Activated CD8-positive, alpha-beta T cell treated with anti-CD3 and anti-CD28 coated beads for 36 hours (primary cell): ENCODE measurements at regions of chr1 and their contacts with region 1.

Region 1: DNA sequence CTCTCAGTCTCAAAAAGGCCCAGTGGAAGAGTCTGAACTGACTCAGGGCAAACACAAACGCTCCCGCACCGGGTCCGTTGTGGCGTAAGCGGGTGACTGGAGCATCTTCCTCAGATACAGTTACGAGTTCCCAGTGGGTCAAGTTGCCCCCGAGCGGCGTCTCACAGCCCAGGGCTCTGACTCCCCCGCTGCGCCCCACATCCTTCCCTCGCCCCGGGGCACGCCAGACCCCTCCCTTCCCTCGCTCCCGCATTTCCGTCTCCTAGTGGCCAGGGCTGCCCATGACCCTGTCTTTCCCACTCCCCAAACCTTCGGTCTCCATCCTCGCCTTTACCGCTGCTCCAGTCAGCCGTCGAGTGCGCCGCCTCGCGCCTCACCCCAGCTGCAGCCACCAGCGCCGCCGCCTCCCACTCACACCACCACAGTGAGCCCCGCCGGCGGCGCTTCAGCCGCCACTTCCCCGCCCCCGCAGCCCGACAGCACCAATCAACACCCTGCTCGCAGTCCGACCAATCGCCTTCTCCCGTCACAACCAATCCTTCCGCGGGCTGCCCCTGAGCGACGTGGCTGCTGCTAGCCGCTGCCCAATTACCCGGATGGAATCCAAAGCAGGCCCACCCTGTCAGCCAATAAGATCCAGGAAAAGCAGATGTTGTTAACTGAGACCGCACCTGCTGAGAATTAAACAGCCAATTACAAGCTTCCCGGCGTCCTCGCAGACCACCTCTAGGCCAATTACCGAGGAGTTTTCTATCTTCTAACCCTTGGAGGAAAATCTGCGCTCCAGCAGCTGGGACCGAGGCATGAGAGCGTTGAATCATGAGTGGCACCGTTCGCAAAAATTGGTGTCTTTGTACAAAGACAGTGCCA is at the start of gene TDRKH:
- DNase-seq: peak; percentile 99
- ATAC-seq: peak; percentile 99
- H3K4me3 Mint-ChIP-seq: peak within 1 kb of the TSS; percentile 91
- H3K27ac Mint-ChIP-seq: peak within 1 kb of the TSS; percentile 79
- H3K4me1 Mint-ChIP-seq: peaks cover 23% of the 10 kb centered on the region
- H3K27me3 Mint-ChIP-seq: no peaks in the 10 kb centered on the region
- CTCF ChIP-seq: no peak
- total RNA-seq, gene TDRKH: 9.7 to 10.5 TPM

Region 2: GRCh38 chr1:151273925-151274466 is 516.3 kb before region 1 on chr1:
- CTCF ChIA-PET with region 1: no interaction called
- POLR2A ChIA-PET with region 1: no interaction called
- intact Hi-C with region 1: no loop called
- DNase-seq: no peak
- ATAC-seq: no peak
- H3K4me3 Mint-ChIP-seq: no peak overlapping the region
- H3K27ac Mint-ChIP-seq: no peak overlapping the region
- H3K4me1 Mint-ChIP-seq: peaks cover 18% of the 10 kb centered on the region
- H3K27me3 Mint-ChIP-seq: no peaks in the 10 kb centered on the region
- CTCF ChIP-seq: no peak

Region 3: GRCh38 chr1:151568626-151569088 is 221.6 kb before region 1 on chr1:
- CTCF ChIA-PET with region 1: no interaction called
- POLR2A ChIA-PET with region 1: no interaction called
- intact Hi-C with region 1: no loop called
- DNase-seq: peak; percentile 8
- ATAC-seq: peak; percentile 70
- H3K4me3 Mint-ChIP-seq: no peak overlapping the region
- H3K27ac Mint-ChIP-seq: no peak overlapping the region
- H3K4me1 Mint-ChIP-seq: no peaks in the 10 kb centered on the region
- H3K27me3 Mint-ChIP-seq: no peaks in the 10 kb centered on the region
- CTCF ChIP-seq: no peak

Region 4: DNA sequence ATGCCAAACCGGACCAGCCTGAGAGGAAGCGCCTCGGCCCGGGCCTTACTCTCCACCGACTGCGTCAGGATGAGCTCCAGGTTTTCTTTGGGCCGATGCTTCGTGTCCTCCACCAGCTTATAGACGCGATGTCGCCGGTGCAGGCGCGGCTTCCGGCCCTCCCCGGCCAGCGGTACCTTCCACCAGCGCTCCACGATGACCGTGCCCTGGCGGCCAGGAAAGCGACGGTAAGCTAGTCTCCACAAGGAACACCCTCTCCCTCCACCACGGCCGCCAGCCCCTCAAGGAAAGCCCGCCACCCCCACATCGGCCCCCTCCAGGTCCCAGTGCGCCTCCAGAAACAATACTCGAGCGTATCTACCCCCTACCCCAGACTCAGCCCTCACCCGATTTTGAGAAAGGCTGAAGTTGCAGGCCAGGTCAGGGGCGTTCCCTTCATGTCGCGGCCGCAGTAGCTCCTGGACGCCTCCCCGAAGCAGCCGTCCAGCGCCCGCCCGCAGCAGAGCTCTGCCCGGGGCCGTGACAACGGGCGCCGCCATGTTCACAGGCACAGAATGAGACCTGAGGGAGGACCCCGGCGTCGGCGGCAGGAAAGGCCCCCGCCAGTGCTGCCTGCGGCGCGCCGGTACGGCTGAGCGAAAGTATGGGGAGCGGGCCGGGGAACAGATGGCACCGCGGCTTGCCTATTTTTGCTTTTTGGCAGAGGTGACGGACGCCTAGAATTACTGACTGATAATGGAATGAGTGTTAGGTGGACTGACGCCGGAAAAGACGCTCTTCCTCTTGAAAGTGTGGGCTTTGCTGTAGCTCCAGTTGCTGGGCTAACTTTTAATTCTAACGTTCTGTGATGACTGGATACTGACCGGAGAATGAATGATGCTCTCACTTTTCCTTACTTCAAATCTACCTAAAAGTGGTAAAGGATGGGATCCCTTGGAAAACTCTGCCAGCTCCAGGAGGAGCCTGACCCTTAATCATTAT is 27.1 kb before region 1 on chr1 and contains the start of gene MRPL9:
- CTCF ChIA-PET with region 1: interaction called, 12 read pairs
- POLR2A ChIA-PET with region 1: interaction called, 7 read pairs
- intact Hi-C with region 1: no loop called
- DNase-seq: peak; percentile 91
- ATAC-seq: peak; percentile 99
- H3K4me3 Mint-ChIP-seq: peak within 1 kb of the TSS; percentile 83
- H3K27ac Mint-ChIP-seq: peak within 1 kb of the TSS; percentile 95
- H3K4me1 Mint-ChIP-seq: peaks cover 18% of the 10 kb centered on the region
- H3K27me3 Mint-ChIP-seq: no peaks in the 10 kb centered on the region
- CTCF ChIP-seq: no peak
- total RNA-seq, gene MRPL9: 121 to 141 TPM

Region 5: GRCh38 chr1:151773702-151774101 is 16.6 kb before region 1 on chr1:
- CTCF ChIA-PET with region 1: no interaction called
- POLR2A ChIA-PET with region 1: no interaction called
- intact Hi-C with region 1: no loop called
- DNase-seq: no peak
- ATAC-seq: no peak
- H3K4me3 Mint-ChIP-seq: no peak overlapping the region
- H3K27ac Mint-ChIP-seq: no peak overlapping the region
- H3K4me1 Mint-ChIP-seq: no peaks in the 10 kb centered on the region
- H3K27me3 Mint-ChIP-seq: no peaks in the 10 kb centered on the region
- CTCF ChIP-seq: no peak

Region 6: GRCh38 chr1:151828965-151829698 is 38.8 kb after region 1 on chr1:
- CTCF ChIA-PET with region 1: interaction called, 3 read pairs
- POLR2A ChIA-PET with region 1: interaction called, 3 read pairs
- intact Hi-C with region 1: loop called (anchors 5 kb)
- DNase-seq: peak; percentile 26
- ATAC-seq: no peak
- H3K4me3 Mint-ChIP-seq: no peak overlapping the region
- H3K27ac Mint-ChIP-seq: peak overlapping the region; percentile 31
- H3K4me1 Mint-ChIP-seq: peaks cover 67% of the 10 kb centered on the region
- H3K27me3 Mint-ChIP-seq: no peaks in the 10 kb centered on the region
- CTCF ChIP-seq: no peak